ENCODE measurements at regions of chr11 and their contacts with region 1.

Region 1: DNA sequence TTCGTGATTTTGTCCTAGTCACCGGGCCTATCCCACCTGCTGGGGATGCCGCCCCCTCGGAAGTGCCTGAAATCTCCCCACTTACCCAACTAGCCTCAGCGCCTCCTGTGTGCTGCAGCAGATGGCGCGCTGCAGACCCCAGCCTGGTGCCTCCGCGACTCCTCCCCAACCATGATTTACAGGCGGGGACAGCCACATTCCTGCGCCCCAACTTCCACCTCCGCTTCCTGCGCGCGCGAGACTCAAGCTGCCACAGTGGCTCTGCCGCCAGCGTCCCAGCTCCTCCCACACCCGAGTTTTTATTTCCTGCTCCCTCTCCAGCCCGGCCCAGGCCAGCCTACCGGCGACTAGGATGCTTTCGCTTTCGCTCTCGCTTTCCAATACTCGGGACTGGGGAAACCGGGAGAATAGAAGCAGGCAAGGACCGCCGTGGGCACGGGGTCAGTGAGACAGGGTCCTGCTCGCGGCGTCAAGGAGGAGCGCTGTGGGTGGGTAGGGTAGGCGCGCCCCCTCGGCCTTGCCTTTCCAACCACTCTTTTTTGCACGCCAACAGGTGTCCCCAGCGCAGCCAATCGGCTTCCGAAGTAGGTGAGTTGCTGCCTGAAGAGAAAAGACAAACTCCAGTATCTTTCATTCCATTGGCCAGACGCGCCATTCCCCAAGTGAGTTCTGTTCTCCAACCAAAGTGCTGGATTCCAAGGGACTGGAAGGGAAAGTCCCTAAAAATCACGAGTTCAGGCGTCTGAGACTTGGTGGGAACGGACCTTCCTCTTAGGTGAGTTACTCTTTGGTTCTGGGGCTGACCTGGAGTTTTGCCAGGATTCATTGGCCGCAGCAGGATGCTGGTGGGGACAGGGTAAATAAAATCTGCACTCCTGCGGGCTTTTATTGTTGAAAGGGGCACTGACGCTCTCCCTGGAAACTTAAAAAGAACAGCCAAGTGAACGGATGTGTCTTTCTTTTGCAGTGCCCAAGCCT is at the start of gene FAM111A:
- DNase-seq: peak; percentile 78
- ATAC-seq: peak; percentile 94
- H3K4me3 ChIP-seq: peak within 1 kb of the TSS; percentile 79 to 82 (median 81)
- H3K27ac ChIP-seq: peak within 1 kb of the TSS; percentile 74
- H3K4me1 ChIP-seq: peaks cover 50% of the 10 kb centered on the region
- H3K27me3 ChIP-seq: no peaks in the 10 kb centered on the region
- CTCF ChIP-seq: peak; percentile 74
- EP300 ChIP-seq: no peak
- POLR2A ChIP-seq: peak; percentile 49; a peak in 3 of 4 replicates
- RAD21 ChIP-seq: peak; percentile 46; the same call in 1 of the 2 replicates
- total RNA-seq, gene FAM111A: 13.5 and 17.0 TPM in 2 replicates

Region 2: DNA sequence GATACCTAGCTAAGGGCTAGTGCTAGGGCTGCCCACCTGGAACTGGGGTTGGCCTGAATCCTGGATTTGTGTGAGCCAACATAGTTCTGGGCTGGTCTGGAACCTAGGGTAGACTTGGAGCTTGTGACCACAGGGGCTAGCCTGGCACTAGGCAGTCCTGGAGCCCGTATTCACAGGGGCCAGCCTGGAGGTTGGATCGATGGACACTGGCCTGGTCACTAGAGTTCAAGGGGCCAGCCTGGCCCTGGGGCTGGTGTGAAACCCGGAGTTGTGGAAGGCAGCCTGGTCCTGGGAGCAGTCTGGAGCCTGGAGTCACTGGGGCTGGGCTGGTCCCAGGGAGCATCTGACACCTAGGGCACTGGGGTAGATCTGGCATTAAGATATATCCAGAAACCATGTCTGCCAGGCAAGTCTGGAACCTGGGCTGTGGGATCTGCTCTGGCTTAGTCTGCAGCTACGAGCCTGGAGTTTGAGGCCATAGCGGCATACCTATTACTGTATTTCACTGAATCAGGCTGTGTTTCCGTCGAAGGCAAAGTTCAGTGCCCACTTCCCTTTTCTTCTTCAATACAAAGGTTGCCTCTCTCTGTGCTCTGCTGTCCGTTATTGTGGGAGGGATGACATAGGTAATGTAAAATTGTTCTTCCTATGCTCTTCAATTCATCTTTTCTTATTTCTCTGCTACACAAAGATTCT is 65.8 kb before region 1 on chr11:
- CTCF ChIA-PET with region 1: no interaction called
- POLR2A ChIA-PET with region 1: no interaction called
- in situ Hi-C with region 1: no loop called
- intact Hi-C with region 1: no loop called
- DNase-seq: no peak
- ATAC-seq: 0 out of 3 replicates have a peak, but pooled peaks have one; percentile 35
- H3K4me3 ChIP-seq: no peak overlapping the region
- H3K27ac ChIP-seq: no peak overlapping the region
- H3K4me1 ChIP-seq: no peaks in the 10 kb centered on the region
- H3K27me3 ChIP-seq: no peaks in the 10 kb centered on the region
- CTCF ChIP-seq: no peak
- EP300 ChIP-seq: no peak
- POLR2A ChIP-seq: no peak
- RAD21 ChIP-seq: no peak

Region 3: DNA sequence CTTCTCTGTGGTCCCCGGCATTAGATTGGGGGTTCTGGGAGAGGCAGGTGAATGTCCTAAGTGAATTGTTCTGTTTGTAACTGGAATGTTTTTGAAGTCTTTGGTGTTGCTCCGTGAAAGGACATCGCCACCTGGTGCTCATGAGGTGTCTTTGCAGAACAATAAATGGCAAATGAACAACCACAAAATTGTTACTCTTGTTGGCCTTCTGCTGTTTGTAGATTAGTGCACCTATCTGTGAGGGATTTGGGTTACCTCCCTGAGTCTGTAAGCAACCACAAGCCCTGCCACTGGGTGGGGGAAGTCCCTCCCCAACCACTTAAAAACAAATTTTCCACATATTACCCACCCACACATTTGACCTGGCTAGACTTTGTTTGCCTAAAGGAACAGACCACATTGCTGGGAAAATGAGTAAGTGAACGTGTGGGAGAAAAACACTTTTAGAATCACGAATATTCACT is 65.2 kb after region 1 on chr11:
- CTCF ChIA-PET with region 1: no interaction called
- POLR2A ChIA-PET with region 1: no interaction called
- in situ Hi-C with region 1: no loop called
- intact Hi-C with region 1: loop called (anchors 10 kb)
- DNase-seq: peak; percentile 48
- ATAC-seq: peak; percentile 67
- H3K4me3 ChIP-seq: no peak overlapping the region
- H3K27ac ChIP-seq: no peak overlapping the region
- H3K4me1 ChIP-seq: no peaks in the 10 kb centered on the region
- H3K27me3 ChIP-seq: no peaks in the 10 kb centered on the region
- CTCF ChIP-seq: peak; percentile 84
- EP300 ChIP-seq: no peak
- POLR2A ChIP-seq: no peak
- RAD21 ChIP-seq: peak; percentile 60

Measured in HepG2 (cell line).